ENCODE measurements at regions of chr17 and their contacts with region 1.

Region 1: GRCh38 chr17:74457146-74457819 is 9.2 kb upstream of the CD300A start:
- DNase-seq: peak in 1 of 2 experiments; percentile 63
- H3K4me3 ChIP-seq: no peak overlapping the region
- H3K27ac ChIP-seq: no peak overlapping the region
- H3K4me1 ChIP-seq: peaks cover 7% of the 10 kb centered on the region; the same call in 1 of the 2 replicates
- H3K27me3 ChIP-seq: peaks cover 30% of the 10 kb centered on the region
- CTCF ChIP-seq: peak; percentile 98

Region 2: DNA sequence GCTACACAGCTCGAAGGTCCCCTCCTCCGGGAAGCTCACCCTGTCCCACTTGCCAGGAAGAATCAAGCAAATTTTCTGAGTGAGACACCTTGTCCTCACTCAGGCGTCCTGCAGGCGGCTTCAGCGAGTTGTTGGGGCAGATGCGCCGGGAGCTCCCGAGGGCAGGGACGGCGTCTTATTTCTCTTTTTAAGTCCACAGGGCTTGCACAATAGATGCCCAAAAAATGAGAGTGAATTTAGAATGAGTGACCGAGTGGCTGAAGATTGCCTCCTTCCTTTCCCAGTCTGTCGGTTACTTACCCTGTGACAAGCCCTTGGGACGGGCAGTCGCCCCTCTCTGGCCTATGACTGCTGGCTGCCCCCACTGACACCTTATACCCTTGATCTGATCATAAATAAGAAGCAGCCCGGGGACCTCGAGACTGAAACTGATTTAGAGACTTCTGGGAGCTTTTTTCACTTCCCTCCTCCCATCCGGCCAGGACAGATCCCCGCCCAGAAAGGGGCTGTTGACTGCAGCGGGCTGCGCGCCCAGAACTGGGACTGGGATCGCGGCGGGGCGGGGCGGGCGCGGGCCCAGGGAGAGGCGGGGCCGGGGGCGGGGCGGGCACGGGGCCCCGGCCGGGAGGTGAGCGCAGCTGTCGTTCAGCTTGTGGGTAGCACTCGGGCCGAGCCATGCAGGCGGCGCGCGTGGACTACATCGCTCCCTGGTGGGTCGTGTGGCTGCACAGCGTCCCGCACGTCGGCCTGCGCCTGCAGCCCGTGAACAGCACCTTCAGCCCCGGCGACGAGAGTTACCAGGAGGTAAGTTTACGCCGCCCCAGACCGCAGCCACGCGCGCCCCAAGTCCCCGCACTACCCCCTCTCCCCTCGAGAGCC is 244.1 kb before region 1 on chr17 and contains the start of gene TTYH2:
- CTCF ChIA-PET with region 1: no interaction called
- POLR2A ChIA-PET with region 1: no interaction called
- intact Hi-C with region 1: loop called (anchors 10 kb)
- DNase-seq: peak; percentile 70 to 83
- H3K4me3 ChIP-seq: peak within 1 kb of the TSS; percentile 64; the same call in 1 of the 2 replicates
- H3K27ac ChIP-seq: no peak within 1 kb of the TSS
- H3K4me1 ChIP-seq: peaks cover 4% of the 10 kb centered on the region; the same call in 1 of the 2 replicates
- H3K27me3 ChIP-seq: peaks cover 13% of the 10 kb centered on the region
- CTCF ChIP-seq: no peak; the same call in 1 of the 2 replicates
- total RNA-seq, gene TTYH2: 1.5 and 2.9 TPM in 2 replicates

Region 3: DNA sequence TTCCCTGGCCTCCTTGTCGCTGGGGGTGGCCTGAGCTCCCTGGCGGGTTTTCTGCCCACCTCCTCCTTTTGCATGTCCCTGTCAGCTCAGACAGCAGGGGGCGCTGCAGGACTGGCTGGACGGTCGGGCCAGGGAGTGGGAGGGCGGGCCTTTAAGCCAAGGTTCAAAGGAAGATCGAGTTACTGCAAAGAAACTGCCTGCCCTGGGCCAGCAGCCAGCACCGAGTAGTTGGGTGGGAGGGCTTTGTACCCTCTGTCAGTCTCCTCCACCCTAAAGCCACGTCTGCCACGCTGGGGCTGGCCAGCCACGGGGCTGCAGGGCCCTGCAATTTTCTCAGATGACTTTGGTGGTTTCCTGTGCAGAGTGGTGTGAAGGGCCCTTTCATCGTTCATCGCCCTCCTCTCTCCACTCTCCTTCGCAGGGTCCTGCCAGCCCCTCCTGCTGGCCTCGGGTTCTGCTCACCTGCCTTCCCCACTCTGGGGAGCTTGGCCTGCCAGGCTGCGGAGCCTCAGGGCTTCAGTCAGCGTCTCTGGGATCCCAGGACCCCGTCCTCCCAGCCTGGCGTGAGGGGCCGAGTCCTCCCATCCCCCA is 77.7 kb before region 1 on chr17:
- CTCF ChIA-PET with region 1: interaction called, 6 read pairs
- POLR2A ChIA-PET with region 1: no interaction called
- intact Hi-C with region 1: loop called (anchors 1 kb)
- DNase-seq: peak; percentile 56 to 90
- H3K4me3 ChIP-seq: no peak overlapping the region
- H3K27ac ChIP-seq: no peak overlapping the region
- H3K4me1 ChIP-seq: peaks cover 17% of the 10 kb centered on the region
- H3K27me3 ChIP-seq: peaks cover 47% of the 10 kb centered on the region
- CTCF ChIP-seq: peak; percentile 95

Region 4: GRCh38 chr17:74394977-74395376 is 62.3 kb before region 1 on chr17:
- CTCF ChIA-PET with region 1: interaction called, 4 read pairs
- POLR2A ChIA-PET with region 1: no interaction called
- intact Hi-C with region 1: loop called (anchors 5 kb)
- DNase-seq: peak; percentile 68 to 77
- H3K4me3 ChIP-seq: no peak overlapping the region
- H3K27ac ChIP-seq: peak overlapping the region; percentile 14; the same call in 1 of the 2 replicates
- H3K4me1 ChIP-seq: peaks cover 12% of the 10 kb centered on the region
- H3K27me3 ChIP-seq: no peaks in the 10 kb centered on the region
- CTCF ChIP-seq: no peak

Region 5: GRCh38 chr17:74430706-74431567 is 26.3 kb before region 1 on chr17:
- CTCF ChIA-PET with region 1: no interaction called
- POLR2A ChIA-PET with region 1: interaction called, 6 read pairs
- intact Hi-C with region 1: loop called (anchors 2 kb)
- DNase-seq: peak; percentile 69 to 83
- H3K4me3 ChIP-seq: peak overlapping the region; percentile 81
- H3K27ac ChIP-seq: peak overlapping the region; percentile 94
- H3K4me1 ChIP-seq: peaks cover 19% of the 10 kb centered on the region
- H3K27me3 ChIP-seq: no peaks in the 10 kb centered on the region
- CTCF ChIP-seq: no peak

Region 6: DNA sequence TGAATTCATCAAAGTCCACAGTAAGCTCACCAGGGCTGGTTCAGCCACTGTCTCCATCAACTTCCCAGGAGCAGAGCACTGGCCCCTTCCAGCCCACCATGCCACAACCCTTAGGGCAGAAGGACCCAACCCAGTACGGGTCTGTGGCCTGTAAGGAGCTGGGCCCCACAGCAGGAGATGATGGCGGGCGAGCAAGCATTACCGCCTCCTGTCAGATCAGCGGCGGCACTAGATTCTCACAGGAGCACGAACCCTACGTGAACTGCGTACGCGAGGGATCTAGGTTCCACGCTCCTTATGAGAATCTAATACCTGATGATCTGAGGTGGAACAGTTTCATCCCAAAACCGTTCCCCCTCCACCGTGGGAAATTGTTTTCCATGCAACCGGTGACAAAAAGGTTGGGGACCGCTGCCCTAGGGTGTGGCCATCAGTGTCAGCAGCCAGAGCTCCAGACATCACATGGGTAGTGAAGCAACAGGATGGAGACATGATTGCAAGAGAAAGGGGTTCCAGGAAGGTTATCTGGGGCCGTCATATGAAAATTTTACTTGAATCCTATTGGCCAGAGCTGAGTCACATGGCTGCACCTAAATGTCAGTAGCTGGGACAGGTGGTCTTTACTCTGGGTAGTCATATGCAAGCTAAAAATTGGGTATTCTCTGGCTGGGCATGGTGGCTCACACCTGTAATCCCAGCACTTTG is 844.4 kb after region 1 on chr17:
- CTCF ChIA-PET with region 1: no interaction called
- POLR2A ChIA-PET with region 1: no interaction called
- intact Hi-C with region 1: no loop called
- DNase-seq: no peak
- H3K4me3 ChIP-seq: no peak overlapping the region
- H3K27ac ChIP-seq: no peak overlapping the region
- H3K4me1 ChIP-seq: no peaks in the 10 kb centered on the region
- H3K27me3 ChIP-seq: no peaks in the 10 kb centered on the region
- CTCF ChIP-seq: no peak